HCT116 (cell line): ENCODE measurements at regions of chr9 and their contacts with region 1.

Region 1: GRCh38 chr9:129343424-129344375 is 165.6 kb upstream of the IER5L start:
- DNase-seq: peak; percentile 62
- ATAC-seq: peak; percentile 87
- H3K4me3 ChIP-seq: no peak overlapping the region
- H3K27ac ChIP-seq: peak overlapping the region; percentile 62
- H3K4me1 ChIP-seq: peaks cover 21 to 45% of the 10 kb centered on the region in 2 experiments
- H3K27me3 ChIP-seq: no peaks in the 10 kb centered on the region
- CTCF ChIP-seq: peak in 1 of 3 experiments; percentile 27; a peak in 1 of 6 replicates
- POLR2A ChIP-seq: no peak
- RAD21 ChIP-seq: no peak

Region 2: GRCh38 chr9:129406278-129407225 is 62.9 kb after region 1 on chr9:
- CTCF ChIA-PET with region 1: no interaction called
- POLR2A ChIA-PET with region 1: no interaction called
- RAD21 ChIA-PET with region 1: no interaction called
- intact Hi-C with region 1: loop called (anchors 5 kb)
- DNase-seq: peak; percentile 73
- ATAC-seq: peak; percentile 88
- H3K4me3 ChIP-seq: peak overlapping the region; percentile 47 to 62
- H3K27ac ChIP-seq: peak overlapping the region; percentile 69
- H3K4me1 ChIP-seq: peaks cover 45 to 80% of the 10 kb centered on the region in 2 experiments
- H3K27me3 ChIP-seq: no peaks in the 10 kb centered on the region
- CTCF ChIP-seq: no peak
- POLR2A ChIP-seq: peak; percentile 80
- RAD21 ChIP-seq: no peak

Region 3: DNA sequence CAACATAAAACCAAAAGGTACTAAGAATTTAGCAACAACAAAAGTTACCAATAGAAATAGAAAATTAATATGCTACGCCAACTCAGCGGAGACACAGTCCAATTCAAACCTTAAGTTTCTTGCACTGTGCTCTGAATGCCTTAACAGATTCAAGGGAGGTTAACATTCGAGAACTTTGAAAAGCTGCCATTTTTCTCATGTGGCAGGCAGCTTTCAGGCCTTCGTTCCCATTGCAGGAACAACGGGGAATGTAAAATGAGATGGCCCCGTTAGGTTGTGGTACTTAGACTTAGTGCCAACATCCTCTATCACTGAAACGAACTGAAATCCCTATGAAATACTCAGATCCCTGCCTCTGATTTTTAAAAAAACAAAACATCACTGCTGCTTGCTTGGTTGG is 676.9 kb after region 1 on chr9:
- CTCF ChIA-PET with region 1: no interaction called
- POLR2A ChIA-PET with region 1: no interaction called
- RAD21 ChIA-PET with region 1: no interaction called
- intact Hi-C with region 1: no loop called
- DNase-seq: no peak
- ATAC-seq: no peak
- H3K4me3 ChIP-seq: no peak overlapping the region
- H3K27ac ChIP-seq: no peak overlapping the region
- H3K4me1 ChIP-seq: peaks cover 17 to 18% of the 10 kb centered on the region in 2 experiments
- H3K27me3 ChIP-seq: no peaks in the 10 kb centered on the region
- CTCF ChIP-seq: no peak
- POLR2A ChIP-seq: no peak
- RAD21 ChIP-seq: no peak